ENCODE measurements at regions of chr2 and their contacts with region 1.

Region 1: GRCh38 chr2:222860740-222861410 is at the start of gene ACSL3:
- DNase-seq: peak; percentile 95
- ATAC-seq: peak; percentile 90
- H3K4me3 ChIP-seq: peak within 1 kb of the TSS; percentile 76
- H3K27ac ChIP-seq: peak within 1 kb of the TSS; percentile 97
- H3K4me1 ChIP-seq: peaks cover 39% of the 10 kb centered on the region
- H3K27me3 ChIP-seq: no peaks in the 10 kb centered on the region
- CTCF ChIP-seq: no peak
- total RNA-seq, gene ACSL3: 216 and 236 TPM in 2 replicates

Region 2: DNA sequence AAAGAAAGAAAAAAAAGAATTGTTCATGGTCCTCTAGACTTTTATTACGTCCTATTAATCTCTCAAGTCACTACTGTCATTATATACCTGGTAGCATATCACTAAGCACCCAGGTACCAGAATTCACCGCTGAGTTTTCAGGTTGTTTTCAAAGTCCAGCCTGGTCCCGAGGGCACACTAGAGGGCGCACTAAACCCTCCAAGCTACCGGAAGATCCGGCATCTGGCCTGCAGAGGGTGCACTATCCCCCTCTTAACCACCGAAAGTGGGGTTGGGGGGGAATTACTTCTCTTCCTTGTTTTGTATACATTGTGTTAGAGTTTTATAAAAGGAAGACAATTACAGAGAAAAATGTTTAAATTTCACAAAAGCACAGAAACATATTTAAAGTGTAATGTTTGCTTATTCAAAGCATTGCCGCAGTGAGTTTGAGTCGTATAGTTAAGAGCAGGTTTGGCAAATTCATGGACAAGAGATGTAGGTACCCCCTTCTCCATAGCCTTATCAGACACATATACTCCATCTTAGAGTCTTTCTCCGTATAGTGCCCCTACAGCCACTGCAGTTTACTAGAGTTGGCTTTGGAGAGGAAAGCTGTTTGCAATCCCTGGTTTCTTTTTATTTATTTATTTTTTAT is 170.2 kb before region 1 on chr2:
- CTCF ChIA-PET with region 1: interaction called, 5 read pairs
- POLR2A ChIA-PET with region 1: no interaction called
- intact Hi-C with region 1: loop called (anchors 1 kb)
- DNase-seq: peak; percentile 86
- ATAC-seq: peak; percentile 87
- H3K4me3 ChIP-seq: peak overlapping the region; percentile 54; the same call in 1 of the 2 replicates
- H3K27ac ChIP-seq: no peak overlapping the region
- H3K4me1 ChIP-seq: no peaks in the 10 kb centered on the region; the same call in 1 of the 2 replicates
- H3K27me3 ChIP-seq: no peaks in the 10 kb centered on the region
- CTCF ChIP-seq: peak; percentile 100

Region 3: GRCh38 chr2:222707689-222708525 is 153.0 kb before region 1 on chr2:
- CTCF ChIA-PET with region 1: interaction called, 8 read pairs
- POLR2A ChIA-PET with region 1: no interaction called
- intact Hi-C with region 1: loop called (anchors 1 kb)
- DNase-seq: peak; percentile 80
- ATAC-seq: peak; percentile 68
- H3K4me3 ChIP-seq: no peak overlapping the region
- H3K27ac ChIP-seq: peak overlapping the region; percentile 43
- H3K4me1 ChIP-seq: peaks cover 22% of the 10 kb centered on the region; the same call in 1 of the 2 replicates
- H3K27me3 ChIP-seq: no peaks in the 10 kb centered on the region
- CTCF ChIP-seq: peak; percentile 88

Region 4: DNA sequence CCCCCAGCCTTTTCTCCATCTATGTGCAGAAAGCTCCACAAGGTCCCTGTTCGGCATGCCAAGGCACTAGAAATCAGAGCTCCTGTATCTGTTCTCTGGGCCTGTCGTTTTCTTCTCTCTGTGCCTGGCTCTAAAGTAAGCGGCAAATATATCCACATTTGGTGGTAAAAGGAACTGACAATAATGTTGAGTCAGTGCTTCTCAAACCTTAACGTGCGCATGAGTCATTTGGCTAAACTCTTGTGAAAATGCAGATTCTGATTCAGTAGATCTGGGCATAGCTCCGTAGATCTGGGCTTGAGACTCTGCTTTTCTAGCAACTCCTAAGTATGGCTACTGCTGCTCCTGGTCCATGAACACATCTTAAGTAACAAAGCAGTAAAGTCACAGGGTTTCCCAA is 16.6 kb before region 1 on chr2:
- CTCF ChIA-PET with region 1: interaction called, 8 read pairs
- POLR2A ChIA-PET with region 1: interaction called, 12 read pairs
- intact Hi-C with region 1: loop called (anchors 1 kb)
- DNase-seq: peak; percentile 95
- ATAC-seq: peak; percentile 67
- H3K4me3 ChIP-seq: peak overlapping the region; percentile 52
- H3K27ac ChIP-seq: peak overlapping the region; percentile 90
- H3K4me1 ChIP-seq: peaks cover 68% of the 10 kb centered on the region
- H3K27me3 ChIP-seq: no peaks in the 10 kb centered on the region
- CTCF ChIP-seq: no peak

Measured in PC-3 (cell line).